Motor neuron (in vitro differentiated cells): ENCODE measurements at regions of chr14 and their contacts with region 1.

Region 1: DNA sequence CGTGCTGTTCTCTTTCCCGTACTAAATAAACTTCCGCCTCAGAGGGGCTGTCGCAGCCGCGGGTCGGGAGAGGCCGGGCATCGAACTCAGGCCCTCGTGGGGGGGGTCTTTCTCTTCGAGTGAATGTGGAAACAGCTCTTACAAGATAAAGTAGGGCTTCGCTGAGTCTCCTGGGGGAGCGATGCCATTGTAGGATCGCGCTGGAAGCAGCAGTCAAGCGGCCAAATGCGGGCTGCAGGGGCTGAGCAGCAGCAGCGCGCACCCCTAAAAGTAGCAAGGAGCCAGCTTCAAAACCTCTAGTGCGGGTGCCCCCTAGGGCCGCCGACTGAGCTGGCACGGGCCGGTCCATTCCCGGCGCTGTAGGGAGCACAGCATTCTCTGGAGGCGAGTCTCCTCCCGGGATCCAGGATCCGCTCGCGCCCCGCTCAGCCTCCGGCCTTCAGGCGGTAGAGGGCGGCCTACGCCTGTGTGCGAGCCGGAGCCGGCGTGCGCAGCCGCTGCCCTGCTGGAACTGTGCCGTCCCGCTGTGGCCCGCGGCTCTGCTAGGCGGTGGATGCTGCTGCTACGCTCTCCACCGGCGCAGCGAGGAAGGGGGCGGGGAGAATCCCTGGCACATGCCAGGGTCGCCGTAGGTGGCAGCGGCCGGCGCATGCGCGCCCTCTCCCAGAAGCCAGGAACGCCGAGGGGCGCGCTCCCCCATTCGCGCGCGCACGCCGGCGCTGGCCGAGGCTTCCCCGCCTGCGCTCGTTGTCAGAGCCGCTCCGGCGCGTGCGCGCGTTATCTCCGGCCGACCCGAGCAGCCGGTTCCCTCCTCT is at the start of gene FUT8:
- ATAC-seq: peak; percentile 76 to 89 (median 86)
- H3K4me3 ChIP-seq: peak within 1 kb of the TSS; percentile 53 to 93 (median 73)
- H3K27ac ChIP-seq: peak within 1 kb of the TSS; percentile 52 to 75
- H3K4me1 ChIP-seq: peaks cover 0 to 7% of the 10 kb centered on the region in 2 donors
- total RNA-seq, gene FUT8: 26.4 to 68.1 (median 30.7) TPM

Region 2: DNA sequence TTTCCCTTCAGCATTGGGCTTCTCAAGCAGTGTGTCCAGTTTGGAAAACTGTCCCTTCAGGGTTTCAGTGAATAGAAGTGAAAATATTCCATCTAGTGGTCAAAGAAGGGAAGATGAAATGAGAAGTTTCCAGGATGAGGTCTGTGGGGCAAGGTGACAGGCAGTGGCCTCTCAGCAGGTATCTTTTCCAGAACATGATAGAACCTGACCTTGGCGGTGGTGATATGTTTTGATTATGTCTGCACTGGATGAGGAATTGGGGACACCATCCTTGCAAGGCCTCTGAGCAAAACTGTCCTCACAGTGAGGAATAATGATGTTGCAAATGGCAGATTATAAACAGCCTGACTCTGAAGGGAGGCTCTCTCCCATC is 474.4 kb before region 1 on chr14:
- in situ Hi-C with region 1: no loop called
- ATAC-seq: peak in 4 of 8 experiments; percentile 18 to 63 (median 54)
- H3K4me3 ChIP-seq: no peak overlapping the region
- H3K27ac ChIP-seq: no peak overlapping the region
- H3K4me1 ChIP-seq: no peaks in the 10 kb centered on the region

Region 3: GRCh38 chr14:65179918-65180724 is 232.1 kb before region 1 on chr14:
- in situ Hi-C with region 1: loop called in 1 of 9 experiments (anchors 25 kb)
- ATAC-seq: peak in 4 of 8 experiments; percentile 18 to 99 (median 72)
- H3K4me3 ChIP-seq: no peak overlapping the region
- H3K27ac ChIP-seq: no peak overlapping the region
- H3K4me1 ChIP-seq: peaks cover 0 to 15% of the 10 kb centered on the region in 2 donors

Region 4: GRCh38 chr14:65255536-65256461 is 156.4 kb before region 1 on chr14:
- in situ Hi-C with region 1: no loop called
- ATAC-seq: peak in 6 of 8 experiments; percentile 32 to 74 (median 64)
- H3K4me3 ChIP-seq: no peak overlapping the region
- H3K27ac ChIP-seq: no peak overlapping the region
- H3K4me1 ChIP-seq: peaks cover 0 to 7% of the 10 kb centered on the region in 2 donors

Region 5: GRCh38 chr14:65832431-65833266 is 420.4 kb after region 1 on chr14:
- in situ Hi-C with region 1: loop called in 2 of 9 experiments (anchors 25 kb)
- ATAC-seq: peak; percentile 23 to 80 (median 36)
- H3K4me3 ChIP-seq: no peak overlapping the region
- H3K27ac ChIP-seq: no peak overlapping the region
- H3K4me1 ChIP-seq: peaks cover 6% of the 10 kb centered on the region in 2 donors

Region 6: DNA sequence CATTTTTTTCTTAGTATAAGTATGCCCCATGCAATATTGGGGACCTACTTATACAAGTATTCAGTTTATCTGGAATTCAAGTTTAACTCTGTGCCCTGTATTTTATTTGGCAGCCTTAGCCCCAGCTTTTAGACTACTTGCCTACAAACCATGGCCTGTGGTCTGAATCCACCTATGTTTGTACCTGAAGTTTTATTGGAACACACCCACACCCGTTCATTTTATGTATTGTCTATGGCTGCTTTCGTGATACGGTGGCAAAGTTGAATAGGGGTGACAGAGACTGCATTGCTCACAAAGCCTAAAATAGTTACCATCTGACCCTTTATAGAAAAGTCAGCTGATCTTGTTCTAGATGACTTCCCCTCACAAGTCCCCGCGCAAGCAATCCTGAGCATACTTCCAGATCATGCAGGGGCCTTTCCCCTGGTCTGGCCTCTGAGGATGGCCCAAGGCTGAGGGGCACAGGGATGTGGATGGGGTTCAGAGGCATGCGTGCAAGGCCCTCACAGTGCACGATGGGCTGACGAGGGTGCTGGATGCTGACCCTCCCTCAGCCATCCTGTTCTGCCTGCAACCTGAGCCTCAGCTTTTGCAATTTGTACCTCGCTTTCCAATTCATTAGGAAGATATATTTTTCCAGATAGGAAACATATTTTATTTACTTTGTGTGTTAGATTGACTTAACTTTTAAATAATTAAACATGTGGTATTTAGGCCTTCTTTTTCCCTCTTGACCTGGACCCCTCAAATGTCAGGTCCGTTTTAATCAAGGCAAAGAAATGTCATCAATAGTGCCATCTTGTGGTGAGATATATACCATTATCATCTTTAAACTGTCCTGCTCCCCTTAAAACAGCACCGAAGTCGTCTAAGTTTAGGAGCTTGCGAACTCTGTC is 546.7 kb after region 1 on chr14:
- in situ Hi-C with region 1: loop called in 4 of 9 experiments (anchors 25 kb)
- ATAC-seq: peak; percentile 44 to 81 (median 52)
- H3K4me3 ChIP-seq: no peak overlapping the region
- H3K27ac ChIP-seq: no peak overlapping the region
- H3K4me1 ChIP-seq: peaks cover 3 to 24% of the 10 kb centered on the region in 2 donors